Posterior vena cava (tissue), 2 donors: ENCODE measurements at regions of chr7 and their contacts with region 1.

Region 1: DNA sequence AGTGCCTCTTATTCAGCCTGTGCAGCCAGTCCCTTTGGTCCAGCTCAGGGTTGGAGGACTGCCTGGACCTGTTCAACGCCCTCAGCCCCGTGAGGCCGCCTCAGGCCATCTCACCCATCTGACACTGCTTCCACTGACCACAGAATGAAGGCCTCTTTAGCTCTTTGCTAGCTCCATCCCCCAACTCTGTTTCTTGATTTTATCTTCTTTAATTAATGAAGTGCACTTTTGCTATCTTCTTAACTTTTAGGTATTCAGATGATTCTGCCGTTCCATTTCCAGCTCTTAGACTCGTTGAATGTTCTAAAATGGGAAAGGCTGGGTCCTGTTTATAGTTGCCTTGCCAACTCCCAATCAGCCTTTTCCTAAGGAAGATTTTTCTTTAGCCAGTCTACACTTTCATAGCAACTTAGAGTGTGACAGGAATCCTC is 22.9 kb upstream of the TRIL start:
- DNase-seq: no peak

Region 2: DNA sequence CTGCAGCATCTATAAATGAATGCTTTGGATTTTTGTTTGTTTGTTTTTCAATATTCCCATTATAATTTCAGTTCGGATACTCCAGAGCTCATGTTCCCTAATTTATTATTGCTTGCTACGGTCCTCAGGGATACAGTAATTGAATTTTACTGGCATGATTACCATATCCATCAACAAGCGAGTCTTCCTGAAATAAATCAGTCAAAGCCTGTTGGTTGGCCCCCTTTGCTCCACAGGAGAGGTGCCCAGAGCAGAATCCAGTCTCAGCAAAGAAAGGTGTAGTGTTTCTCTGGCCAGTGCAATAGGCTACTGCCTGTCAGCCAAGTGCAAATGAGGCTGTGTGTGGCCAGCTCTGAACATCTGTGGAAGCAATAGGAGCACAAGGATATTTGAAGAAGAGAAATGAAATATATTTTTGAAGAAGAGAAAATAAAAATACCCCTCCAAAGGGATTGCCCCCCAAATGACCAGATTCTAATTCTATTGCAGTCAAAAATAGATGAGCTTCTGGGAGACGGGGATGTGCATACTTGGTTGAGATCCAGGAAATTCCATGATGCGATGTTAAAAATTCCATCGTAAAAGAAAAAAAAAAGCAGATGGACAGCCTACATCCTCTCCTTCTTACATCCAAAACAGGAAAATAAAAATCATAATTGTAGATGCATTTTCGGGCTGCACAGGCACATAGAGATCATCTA is 41.0 kb before region 1 on chr7:
- intact Hi-C with region 1: loop called in 1 of 2 experiments (anchors 1 kb)
- DNase-seq: no peak

Region 3: GRCh38 chr7:30412810-30413504 is 1432.0 kb after region 1 on chr7:
- intact Hi-C with region 1: loop called in 1 of 2 experiments (anchors 10 kb)
- DNase-seq: no peak